Mammary epithelial cell (primary cell): ENCODE measurements at regions of chr3 and their contacts with region 1.

Region 1: DNA sequence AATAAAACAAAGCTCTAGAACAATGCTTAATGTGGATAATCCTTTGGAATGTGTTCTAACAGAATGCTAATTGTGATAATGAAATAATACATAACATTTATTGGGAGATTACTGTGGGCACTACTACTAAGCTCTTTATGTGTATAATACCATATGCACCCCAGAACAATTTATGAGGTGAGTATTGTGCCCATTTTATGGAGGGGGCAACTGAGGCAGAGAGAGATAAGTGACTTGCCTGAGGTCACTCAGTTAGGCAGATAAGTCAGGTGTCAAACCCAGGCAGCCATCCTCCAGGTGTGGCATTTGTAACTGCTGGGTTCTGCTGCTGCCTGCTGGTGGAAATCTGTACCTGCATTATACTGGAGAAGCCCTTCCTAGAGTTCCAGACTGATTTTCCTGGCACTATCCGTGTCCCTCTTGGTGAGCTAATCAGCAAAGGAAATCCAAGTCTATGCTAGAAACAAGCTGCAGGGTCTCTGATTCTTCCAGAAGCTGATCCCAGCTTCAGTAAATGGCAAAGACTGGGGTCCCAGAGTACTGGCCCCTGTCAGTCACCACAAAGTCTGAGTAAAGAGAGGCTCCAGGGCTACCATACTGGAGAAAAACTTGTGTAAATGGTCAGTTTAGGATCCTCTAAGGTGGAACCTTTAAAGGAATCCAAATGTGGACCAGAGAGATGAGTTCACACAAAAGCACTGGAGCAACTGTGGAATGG is 22.6 kb upstream of the RBP1 start:
- DNase-seq: peak; percentile 45
- H3K4me3 ChIP-seq: no peak overlapping the region
- H3K27ac ChIP-seq: no peak overlapping the region
- H3K4me1 ChIP-seq: peaks cover 30% of the 10 kb centered on the region
- H3K27me3 ChIP-seq: no peaks in the 10 kb centered on the region
- CTCF ChIP-seq: peak; percentile 96 to 98

Region 2: GRCh38 chr3:139353920-139354556 is 208.1 kb before region 1 on chr3:
- CTCF ChIA-PET with region 1: interaction called, 4 read pairs
- dilution Hi-C with region 1: no loop called
- in situ Hi-C with region 1: no loop called
- intact Hi-C with region 1: loop called (anchors 5 kb)
- DNase-seq: peak; percentile 54
- H3K4me3 ChIP-seq: no peak overlapping the region
- H3K27ac ChIP-seq: no peak overlapping the region
- H3K4me1 ChIP-seq: no peaks in the 10 kb centered on the region
- H3K27me3 ChIP-seq: no peaks in the 10 kb centered on the region
- CTCF ChIP-seq: peak; percentile 60 to 69

Region 3: DNA sequence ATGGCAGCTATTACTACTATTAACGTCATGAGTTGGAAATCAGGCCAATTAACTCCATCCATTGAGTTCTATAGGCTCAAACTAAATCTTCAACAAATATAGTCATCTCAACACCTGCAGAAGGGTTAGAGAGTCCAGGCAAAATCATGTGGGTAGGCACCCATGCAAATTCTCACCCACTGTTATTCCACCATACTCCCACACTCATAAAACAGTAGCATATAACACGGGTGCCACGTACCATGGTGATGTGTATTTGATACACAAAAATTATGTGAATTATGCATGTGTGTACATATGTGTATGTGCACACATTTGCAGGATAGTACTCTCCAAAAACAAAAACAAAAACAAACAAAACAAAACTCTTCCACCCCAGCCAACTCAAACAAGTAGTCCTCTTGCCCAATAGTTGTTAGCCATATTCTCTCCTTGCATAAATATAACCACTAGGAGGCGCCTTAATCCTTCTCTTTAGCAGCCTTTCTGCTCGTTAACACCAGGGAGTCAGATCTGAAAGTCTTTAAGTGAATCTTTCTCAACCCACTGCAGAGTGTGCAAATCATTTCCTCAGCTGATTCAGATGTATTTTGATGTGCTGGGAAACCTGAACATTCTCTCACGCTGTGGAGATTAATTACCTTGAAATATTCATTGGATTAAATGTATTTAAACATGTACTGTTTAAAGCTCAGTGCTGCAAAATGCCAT is 134.7 kb before region 1 on chr3:
- CTCF ChIA-PET with region 1: interaction called, 5 read pairs
- dilution Hi-C with region 1: no loop called
- in situ Hi-C with region 1: loop called in 1 of 2 experiments (anchors 5 kb)
- intact Hi-C with region 1: loop called (anchors 1 kb)
- DNase-seq: peak; percentile 67
- H3K4me3 ChIP-seq: no peak overlapping the region
- H3K27ac ChIP-seq: no peak overlapping the region
- H3K4me1 ChIP-seq: no peaks in the 10 kb centered on the region
- H3K27me3 ChIP-seq: no peaks in the 10 kb centered on the region
- CTCF ChIP-seq: peak; percentile 80 to 81

Region 4: GRCh38 chr3:139473155-139473771 is 88.9 kb before region 1 on chr3:
- CTCF ChIA-PET with region 1: no interaction called
- dilution Hi-C with region 1: no loop called
- in situ Hi-C with region 1: no loop called
- intact Hi-C with region 1: no loop called
- DNase-seq: peak; percentile 43
- H3K4me3 ChIP-seq: no peak overlapping the region
- H3K27ac ChIP-seq: no peak overlapping the region
- H3K4me1 ChIP-seq: no peaks in the 10 kb centered on the region
- H3K27me3 ChIP-seq: no peaks in the 10 kb centered on the region
- CTCF ChIP-seq: no peak

Region 5: GRCh38 chr3:139519998-139520737 is 42.0 kb before region 1 on chr3:
- CTCF ChIA-PET with region 1: no interaction called
- dilution Hi-C with region 1: no loop called
- in situ Hi-C with region 1: no loop called
- intact Hi-C with region 1: loop called (anchors 1 kb)
- DNase-seq: peak; percentile 41
- H3K4me3 ChIP-seq: no peak overlapping the region
- H3K27ac ChIP-seq: no peak overlapping the region
- H3K4me1 ChIP-seq: no peaks in the 10 kb centered on the region
- H3K27me3 ChIP-seq: no peaks in the 10 kb centered on the region
- CTCF ChIP-seq: peak; percentile 42 to 54

Region 6: DNA sequence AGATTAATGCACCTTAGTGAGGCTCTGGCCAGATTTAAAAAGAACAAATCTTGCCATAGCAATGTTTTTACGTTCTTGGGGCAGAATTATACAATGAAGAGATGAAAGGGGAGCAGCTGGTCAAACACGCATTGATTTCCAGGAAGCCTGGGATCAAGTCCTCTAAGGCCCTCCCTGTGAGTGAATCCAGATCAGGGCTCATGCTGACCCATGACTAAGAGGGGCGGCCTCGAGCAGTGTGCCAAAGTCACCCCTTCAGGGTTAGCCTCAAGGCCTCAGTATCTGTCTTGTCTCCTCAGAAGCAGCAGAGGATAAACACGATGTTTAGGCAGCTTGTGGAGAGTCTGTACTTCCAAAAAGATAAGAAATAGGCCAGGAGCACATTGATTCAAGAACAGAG is 13.3 kb before region 1 on chr3:
- CTCF ChIA-PET with region 1: no interaction called
- dilution Hi-C with region 1: no loop called
- in situ Hi-C with region 1: no loop called
- intact Hi-C with region 1: no loop called
- DNase-seq: no peak
- H3K4me3 ChIP-seq: no peak overlapping the region
- H3K27ac ChIP-seq: no peak overlapping the region
- H3K4me1 ChIP-seq: no peaks in the 10 kb centered on the region
- H3K27me3 ChIP-seq: no peaks in the 10 kb centered on the region
- CTCF ChIP-seq: no peak

Region 7: DNA sequence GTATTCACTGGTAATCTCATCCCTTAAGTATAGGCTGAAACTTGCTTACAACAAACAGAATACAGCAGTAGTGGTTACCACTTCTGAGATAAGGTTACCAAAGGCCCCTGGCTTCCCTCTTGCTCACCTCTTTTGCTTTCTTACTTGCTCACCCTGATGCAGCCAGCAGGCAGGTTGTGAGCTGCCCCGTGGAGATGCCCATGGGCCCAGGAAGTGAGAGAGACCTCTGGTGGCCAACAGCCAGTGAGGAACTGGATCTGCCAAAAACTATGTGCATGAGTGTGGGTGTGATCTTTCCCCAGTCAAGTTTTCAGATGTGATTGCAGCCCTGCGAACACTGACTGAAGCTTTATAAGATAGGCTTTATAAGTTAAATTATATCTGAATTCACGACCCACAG is 66.9 kb after region 1 on chr3:
- CTCF ChIA-PET with region 1: no interaction called
- dilution Hi-C with region 1: no loop called
- in situ Hi-C with region 1: no loop called
- intact Hi-C with region 1: loop called (anchors 1 kb)
- DNase-seq: peak; percentile 68
- H3K4me3 ChIP-seq: no peak overlapping the region
- H3K27ac ChIP-seq: no peak overlapping the region
- H3K4me1 ChIP-seq: peaks cover 3% of the 10 kb centered on the region
- H3K27me3 ChIP-seq: no peaks in the 10 kb centered on the region
- CTCF ChIP-seq: peak; percentile 76 to 77

Region 8: DNA sequence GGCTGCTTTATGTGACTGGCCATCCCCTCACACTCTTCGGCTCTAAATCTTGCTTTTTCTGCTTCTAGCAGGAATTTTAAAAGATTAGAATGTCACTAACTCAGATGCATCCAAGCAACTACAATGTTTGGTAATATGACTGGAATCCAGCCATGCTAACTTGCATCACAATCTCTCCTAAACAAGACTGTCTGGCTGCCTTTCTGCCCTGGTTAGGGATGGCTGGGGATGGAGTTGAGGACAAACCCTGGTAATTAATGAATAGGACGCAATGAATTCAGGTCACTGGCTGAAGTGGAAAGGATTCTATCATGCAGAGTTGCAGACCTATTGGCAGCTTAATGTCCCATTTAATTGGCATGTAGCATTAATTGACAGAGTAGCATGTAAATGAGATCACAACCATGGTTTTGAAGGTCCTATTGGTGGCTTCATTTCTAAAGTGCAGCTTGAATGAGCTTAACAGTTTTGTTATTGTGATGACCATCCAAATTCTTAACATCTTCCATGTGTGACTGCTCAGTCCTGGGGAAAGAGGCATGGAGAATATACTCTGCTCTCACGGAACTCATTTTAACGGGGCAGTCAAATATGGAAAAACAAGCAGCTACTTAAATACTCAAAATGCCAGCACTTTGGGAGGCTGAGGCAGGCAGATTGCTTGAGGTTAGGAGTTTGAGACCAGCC is 93.9 kb after region 1 on chr3:
- CTCF ChIA-PET with region 1: no interaction called
- dilution Hi-C with region 1: no loop called
- in situ Hi-C with region 1: no loop called
- intact Hi-C with region 1: no loop called
- DNase-seq: no peak
- H3K4me3 ChIP-seq: no peak overlapping the region
- H3K27ac ChIP-seq: no peak overlapping the region
- H3K4me1 ChIP-seq: peaks cover 21% of the 10 kb centered on the region
- H3K27me3 ChIP-seq: no peaks in the 10 kb centered on the region
- CTCF ChIP-seq: no peak

Region 9: DNA sequence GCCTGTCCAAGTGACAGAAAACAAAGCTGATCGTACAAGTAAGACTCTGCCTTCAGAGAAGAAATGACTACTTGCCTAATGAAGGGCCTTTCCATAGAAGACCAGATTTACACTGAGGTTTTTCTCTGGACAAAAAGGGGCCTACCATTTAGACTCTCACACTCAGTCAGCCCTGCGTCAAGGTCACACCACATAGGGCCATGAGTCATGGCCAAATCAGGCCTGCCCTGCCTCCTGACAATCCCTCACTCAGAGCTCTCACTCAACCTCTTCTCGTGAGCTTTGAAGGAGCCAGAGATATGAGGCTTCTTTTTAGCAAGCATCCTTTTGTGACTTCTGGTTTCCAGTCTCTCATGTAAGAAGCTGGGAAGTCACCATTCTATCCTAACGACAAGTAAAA is 183.7 kb after region 1 on chr3:
- CTCF ChIA-PET with region 1: no interaction called
- dilution Hi-C with region 1: no loop called
- in situ Hi-C with region 1: no loop called
- intact Hi-C with region 1: no loop called
- DNase-seq: peak; percentile 58
- H3K4me3 ChIP-seq: no peak overlapping the region
- H3K27ac ChIP-seq: no peak overlapping the region
- H3K4me1 ChIP-seq: no peaks in the 10 kb centered on the region
- H3K27me3 ChIP-seq: no peaks in the 10 kb centered on the region
- CTCF ChIP-seq: no peak